Activated naive CD4-positive, alpha-beta T cell treated with anti-CD3 and anti-CD28 coated beads for 36 hours (primary cell): ENCODE measurements at regions of chr20 and their contacts with region 1.

Region 1: GRCh38 chr20:31514159-31515071 is at the start of gene HM13:
- DNase-seq: peak; percentile 89
- H3K4me3 Mint-ChIP-seq: no peak within 1 kb of the TSS
- H3K27ac Mint-ChIP-seq: peak within 1 kb of the TSS; percentile 1
- H3K4me1 Mint-ChIP-seq: peaks cover 9% of the 10 kb centered on the region
- H3K27me3 Mint-ChIP-seq: no peaks in the 10 kb centered on the region
- total RNA-seq, gene HM13: 67.3 to 69.4 TPM

Region 2: GRCh38 chr20:31394900-31395299 is 119.5 kb before region 1 on chr20:
- CTCF ChIA-PET with region 1: no interaction called
- intact Hi-C with region 1: no loop called
- DNase-seq: no peak
- H3K4me3 Mint-ChIP-seq: no peak overlapping the region
- H3K27ac Mint-ChIP-seq: no peak overlapping the region
- H3K4me1 Mint-ChIP-seq: no peaks in the 10 kb centered on the region
- H3K27me3 Mint-ChIP-seq: peaks cover 11% of the 10 kb centered on the region

Region 3: DNA sequence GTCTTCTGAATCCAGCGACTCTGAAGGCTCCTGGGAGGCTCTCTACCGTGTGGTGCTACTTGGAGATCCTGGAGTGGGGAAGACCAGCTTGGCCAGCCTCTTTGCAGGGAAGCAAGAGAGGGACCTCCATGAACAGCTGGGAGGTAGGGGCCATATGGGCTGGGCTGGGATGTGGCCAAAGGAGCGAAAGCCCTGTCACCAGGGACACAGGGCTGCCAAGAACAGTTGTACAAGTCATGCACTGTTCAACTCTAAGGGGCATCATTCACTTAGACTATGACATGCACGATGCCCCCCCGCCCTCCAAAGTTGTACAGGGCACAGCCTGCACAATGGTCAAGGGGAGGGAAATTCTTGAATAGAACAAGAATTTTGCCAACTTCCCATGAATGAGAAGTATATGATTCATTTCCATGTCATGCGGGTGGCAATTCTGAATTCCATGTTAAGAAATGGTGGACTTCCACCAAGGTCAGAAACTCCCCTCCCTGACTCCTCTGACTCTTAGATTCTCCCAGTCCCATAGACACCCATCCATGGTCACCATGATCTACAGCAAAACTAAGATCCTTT is 37.7 kb before region 1 on chr20:
- CTCF ChIA-PET with region 1: no interaction called
- intact Hi-C with region 1: no loop called
- DNase-seq: no peak
- H3K4me3 Mint-ChIP-seq: no peak overlapping the region
- H3K27ac Mint-ChIP-seq: no peak overlapping the region
- H3K4me1 Mint-ChIP-seq: peaks cover 10% of the 10 kb centered on the region
- H3K27me3 Mint-ChIP-seq: peaks cover 43% of the 10 kb centered on the region

Region 4: DNA sequence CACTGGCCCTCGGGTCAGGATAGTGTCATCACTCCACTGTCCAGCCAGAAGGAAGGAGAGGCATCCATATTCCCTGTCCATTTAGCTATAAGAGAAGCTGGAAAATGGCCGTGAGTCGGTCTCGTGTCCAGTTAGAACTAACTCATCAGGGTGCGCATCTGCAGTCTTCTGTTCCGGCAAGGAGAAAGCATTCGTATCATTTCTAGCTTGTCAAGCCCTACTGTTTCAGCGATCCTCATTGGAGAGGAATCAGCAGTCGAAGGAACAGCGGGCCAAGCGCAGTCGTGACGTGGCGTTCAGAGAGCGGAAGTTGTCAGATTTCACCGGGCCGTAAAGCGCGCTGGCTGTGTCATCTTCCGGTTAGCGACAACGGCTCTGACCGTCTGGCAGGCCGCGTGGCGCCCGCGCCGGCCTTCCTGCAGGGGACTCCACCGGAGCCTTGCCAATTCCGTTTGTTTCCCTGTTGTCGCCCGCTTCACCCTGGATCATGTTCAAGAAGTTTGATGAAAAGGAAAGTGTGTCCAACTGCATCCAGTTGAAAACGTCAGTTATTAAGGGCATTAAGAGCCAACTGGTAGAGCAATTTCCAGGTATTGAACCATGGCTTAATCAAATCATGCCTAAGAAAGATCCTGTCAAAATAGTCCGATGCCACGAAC is 32.7 kb after region 1 on chr20:
- CTCF ChIA-PET with region 1: interaction called, 12 read pairs
- intact Hi-C with region 1: loop called (anchors 1 kb)
- DNase-seq: peak; percentile 89
- H3K4me3 Mint-ChIP-seq: peak overlapping the region; percentile 92
- H3K27ac Mint-ChIP-seq: peak overlapping the region; percentile 97
- H3K4me1 Mint-ChIP-seq: peaks cover 25% of the 10 kb centered on the region
- H3K27me3 Mint-ChIP-seq: no peaks in the 10 kb centered on the region

Region 5: DNA sequence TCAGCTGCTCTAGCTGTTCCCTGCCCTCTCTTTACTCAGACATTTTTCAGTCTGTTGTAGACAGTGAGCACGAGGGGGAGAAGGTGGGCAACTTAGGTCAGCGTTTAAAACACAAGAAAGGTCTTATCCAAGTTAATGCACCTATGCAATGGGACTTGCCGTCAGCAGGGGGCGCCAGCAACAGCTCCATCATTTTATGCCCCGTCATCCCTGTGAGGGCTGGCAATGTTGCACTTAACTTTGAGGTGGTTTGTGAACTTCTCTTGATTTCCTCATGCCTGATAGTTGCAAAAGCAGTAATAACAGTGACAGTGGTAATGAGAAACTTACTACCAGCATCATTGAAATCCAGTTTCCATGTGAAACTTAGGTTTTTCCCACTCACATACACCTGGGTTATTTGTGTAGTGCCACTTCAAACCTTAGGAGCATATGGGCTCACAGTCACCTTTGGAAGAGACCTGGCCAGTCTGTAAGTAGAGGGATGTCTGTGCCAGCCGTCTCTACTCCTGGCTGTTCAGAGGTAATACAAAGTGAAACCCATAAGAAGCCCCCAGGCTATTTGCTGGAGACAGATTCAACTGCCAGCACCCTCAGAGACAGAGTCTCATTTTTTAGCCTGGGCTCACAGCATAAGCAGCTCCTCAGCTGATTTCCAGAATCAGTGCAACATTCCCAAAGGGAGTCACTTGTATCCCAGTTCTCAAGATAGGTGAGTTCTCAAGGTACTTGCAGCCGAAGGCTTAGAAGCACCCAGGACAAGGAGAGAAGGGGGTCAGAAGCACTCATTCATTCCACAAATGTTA is 45.9 kb after region 1 on chr20:
- CTCF ChIA-PET with region 1: interaction called, 5 read pairs
- intact Hi-C with region 1: loop called (anchors 5 kb)
- DNase-seq: peak; percentile 92
- H3K4me3 Mint-ChIP-seq: no peak overlapping the region
- H3K27ac Mint-ChIP-seq: peak overlapping the region; percentile 61
- H3K4me1 Mint-ChIP-seq: peaks cover 13% of the 10 kb centered on the region
- H3K27me3 Mint-ChIP-seq: no peaks in the 10 kb centered on the region